ENCODE measurements at regions of chr4 and their contacts with region 1.

Region 1: DNA sequence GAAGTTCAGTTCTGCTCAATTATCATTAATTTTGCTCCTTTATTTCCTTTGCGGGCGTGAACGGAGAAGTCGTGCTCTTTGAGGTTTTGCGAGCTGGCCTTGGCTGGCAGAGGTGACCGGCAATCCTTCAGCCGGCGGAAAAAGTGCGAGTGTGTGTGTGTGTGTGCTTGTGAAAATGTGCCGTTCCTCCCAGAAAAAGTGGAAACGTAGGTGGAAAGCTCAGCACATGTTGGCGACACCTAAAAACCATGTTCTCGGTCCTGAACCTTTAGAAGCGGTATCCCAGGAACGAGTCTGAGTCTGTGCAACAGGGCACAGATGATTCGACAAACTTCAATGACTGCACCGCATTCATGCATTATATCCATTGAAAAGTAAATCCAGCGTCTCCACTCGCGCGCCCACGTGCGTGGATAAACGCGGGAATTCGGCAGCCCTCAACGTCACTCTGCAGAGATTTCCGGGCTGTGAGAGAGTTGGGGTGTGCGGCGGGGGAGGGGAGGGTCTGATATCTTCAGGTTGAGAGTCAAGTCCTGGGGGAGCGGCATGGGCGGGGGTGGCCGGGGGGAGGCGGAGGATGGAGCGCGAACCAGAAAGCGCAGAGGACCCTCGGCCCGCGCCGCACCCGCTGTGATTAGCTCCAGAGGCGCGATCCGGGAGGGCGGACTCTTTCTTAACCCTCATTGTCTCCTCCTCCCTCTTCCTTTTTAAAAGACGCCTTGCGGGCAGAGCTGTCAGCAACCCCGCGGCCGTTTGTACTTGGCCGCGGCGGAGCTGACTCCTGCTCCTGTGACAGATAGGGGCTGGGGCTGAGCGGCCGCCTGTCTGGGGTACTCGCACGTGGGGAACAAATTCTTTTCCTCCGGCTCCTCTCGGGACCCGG is at the start of gene SHISA3:
- DNase-seq: peak; percentile 14 to 37
- ATAC-seq: peak; percentile 45 to 70 (median 57)
- H3K4me3 ChIP-seq: peak within 1 kb of the TSS; percentile 14 to 80 (median 58)
- H3K27ac ChIP-seq: peak within 1 kb of the TSS in 6 of 10 donors; percentile 1 to 55 (median 35)
- H3K4me1 ChIP-seq: peaks cover 0 to 36% (median 28%) of the 10 kb centered on the region in 9 donors
- H3K27me3 ChIP-seq: peaks cover 0 to 72% (median 41%) of the 10 kb centered on the region in 7 donors
- CTCF ChIP-seq: no peak
- total RNA-seq, gene SHISA3: 1.5 to 8.8 (median 2.8) TPM

Region 2: GRCh38 chr4:42008011-42008786 is 388.8 kb before region 1 on chr4:
- intact Hi-C with region 1: no loop called
- DNase-seq: no peak
- ATAC-seq: peak in 7 of 8 donors; percentile 61 to 91 (median 85)
- H3K4me3 ChIP-seq: no peak overlapping the region
- H3K27ac ChIP-seq: peak overlapping the region; percentile 3 to 80 (median 57)
- H3K4me1 ChIP-seq: peaks cover 2 to 39% (median 13%) of the 10 kb centered on the region in 9 donors
- H3K27me3 ChIP-seq: no peaks in the 10 kb centered on the region
- CTCF ChIP-seq: no peak

Region 3: DNA sequence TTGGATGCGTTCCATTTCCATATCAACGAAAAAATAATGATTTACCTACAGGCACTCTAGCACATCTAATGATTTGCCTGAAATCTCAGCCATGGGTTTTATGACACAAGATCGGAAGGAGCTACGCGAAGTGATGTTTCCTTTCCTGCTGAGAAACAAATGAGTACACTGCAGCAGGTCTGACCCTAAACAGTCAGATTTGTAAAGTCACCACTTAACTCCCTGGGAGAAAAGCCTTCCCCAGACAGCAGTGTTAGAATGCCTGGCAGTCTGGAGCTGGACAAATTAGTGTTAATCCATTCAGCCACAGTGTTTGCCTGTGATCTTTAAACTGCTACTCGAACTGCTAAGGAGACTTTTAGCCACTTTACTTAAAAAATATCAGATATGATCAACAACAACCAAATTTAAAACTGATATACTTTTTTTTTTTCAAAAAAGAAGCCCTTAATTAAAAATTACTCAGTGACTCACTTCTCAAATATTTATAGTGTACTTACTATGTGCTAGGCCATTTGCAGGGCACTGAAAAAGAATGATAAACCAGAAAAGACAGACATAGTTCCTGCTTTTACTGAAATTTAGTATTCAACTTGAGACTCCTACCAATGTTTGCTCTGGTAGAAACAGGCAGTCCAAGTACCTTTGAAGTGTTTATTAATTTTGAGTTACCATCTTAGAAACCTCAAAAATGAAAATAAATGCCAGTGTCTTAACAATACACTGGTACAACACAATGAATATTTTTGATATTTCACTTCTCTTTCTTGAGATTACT is 104.8 kb after region 1 on chr4:
- intact Hi-C with region 1: loop called in 1 of 10 experiments (anchors 10 kb)
- DNase-seq: no peak
- ATAC-seq: no peak
- H3K4me3 ChIP-seq: no peak overlapping the region
- H3K27ac ChIP-seq: no peak overlapping the region
- H3K4me1 ChIP-seq: peaks cover 0 to 3% (median 0%) of the 10 kb centered on the region in 9 donors
- H3K27me3 ChIP-seq: no peaks in the 10 kb centered on the region
- CTCF ChIP-seq: no peak

Measured in heart right ventricle (tissue), 16 donors.